ENCODE measurements at regions of chr2 and their contacts with region 1.

Region 1: GRCh38 chr2:206159346-206160124 is at the starts of genes EEF1B2 and NDUFS1:
- ATAC-seq: peak; percentile 82 to 93 (median 90)
- H3K4me3 ChIP-seq: peak within 1 kb of the TSS; percentile 47 to 93 (median 65)
- H3K27ac ChIP-seq: peak within 1 kb of the TSS; percentile 92 to 95
- H3K4me1 ChIP-seq: peaks cover 3 to 11% of the 10 kb centered on the region in 2 donors
- total RNA-seq, gene EEF1B2: 478 to 1,273 (median 734) TPM
- total RNA-seq, gene NDUFS1: 64.0 to 108 (median 75.8) TPM

Region 2: GRCh38 chr2:206260188-206261012 is 100.9 kb after region 1 on chr2:
- in situ Hi-C with region 1: loop called in 1 of 9 experiments (anchors 10 kb)
- ATAC-seq: peak in 4 of 8 experiments; percentile 30 to 82 (median 60)
- H3K4me3 ChIP-seq: no peak overlapping the region
- H3K27ac ChIP-seq: no peak overlapping the region
- H3K4me1 ChIP-seq: no peaks in the 10 kb centered on the region

Region 3: GRCh38 chr2:206353685-206354084 is 194.2 kb after region 1 on chr2:
- in situ Hi-C with region 1: loop called in 1 of 9 experiments (anchors 25 kb)
- ATAC-seq: no peak
- H3K4me3 ChIP-seq: no peak overlapping the region
- H3K27ac ChIP-seq: no peak overlapping the region
- H3K4me1 ChIP-seq: no peaks in the 10 kb centered on the region

Region 4: GRCh38 chr2:206442833-206443734 is 283.5 kb after region 1 on chr2 and contains the start of gene ADAM23:
- in situ Hi-C with region 1: loop called in 1 of 9 experiments (anchors 25 kb)
- ATAC-seq: peak; percentile 80 to 92 (median 88)
- H3K4me3 ChIP-seq: peak within 1 kb of the TSS; percentile 65 to 95 (median 76)
- H3K27ac ChIP-seq: peak within 1 kb of the TSS; percentile 65 to 66
- H3K4me1 ChIP-seq: peaks cover 21 to 40% of the 10 kb centered on the region in 2 donors
- total RNA-seq, gene ADAM23: 3.2 to 44.4 (median 16.6) TPM

Measured in motor neuron (in vitro differentiated cells).